Prostate gland (tissue), 2 donors: ENCODE measurements at regions of chr14 and their contacts with region 1.

Region 1: GRCh38 chr14:100108042-100108825 is 43.0 kb downstream of the EVL start:
- DNase-seq: peak; percentile 61
- H3K4me3 ChIP-seq: no peak overlapping the region
- H3K27ac ChIP-seq: no peak overlapping the region
- H3K4me1 ChIP-seq: peaks cover 8% of the 10 kb centered on the region
- H3K27me3 ChIP-seq: no peaks in the 10 kb centered on the region
- CTCF ChIP-seq: peak; percentile 66 to 87 (median 76)
- POLR2A ChIP-seq: no peak

Region 2: DNA sequence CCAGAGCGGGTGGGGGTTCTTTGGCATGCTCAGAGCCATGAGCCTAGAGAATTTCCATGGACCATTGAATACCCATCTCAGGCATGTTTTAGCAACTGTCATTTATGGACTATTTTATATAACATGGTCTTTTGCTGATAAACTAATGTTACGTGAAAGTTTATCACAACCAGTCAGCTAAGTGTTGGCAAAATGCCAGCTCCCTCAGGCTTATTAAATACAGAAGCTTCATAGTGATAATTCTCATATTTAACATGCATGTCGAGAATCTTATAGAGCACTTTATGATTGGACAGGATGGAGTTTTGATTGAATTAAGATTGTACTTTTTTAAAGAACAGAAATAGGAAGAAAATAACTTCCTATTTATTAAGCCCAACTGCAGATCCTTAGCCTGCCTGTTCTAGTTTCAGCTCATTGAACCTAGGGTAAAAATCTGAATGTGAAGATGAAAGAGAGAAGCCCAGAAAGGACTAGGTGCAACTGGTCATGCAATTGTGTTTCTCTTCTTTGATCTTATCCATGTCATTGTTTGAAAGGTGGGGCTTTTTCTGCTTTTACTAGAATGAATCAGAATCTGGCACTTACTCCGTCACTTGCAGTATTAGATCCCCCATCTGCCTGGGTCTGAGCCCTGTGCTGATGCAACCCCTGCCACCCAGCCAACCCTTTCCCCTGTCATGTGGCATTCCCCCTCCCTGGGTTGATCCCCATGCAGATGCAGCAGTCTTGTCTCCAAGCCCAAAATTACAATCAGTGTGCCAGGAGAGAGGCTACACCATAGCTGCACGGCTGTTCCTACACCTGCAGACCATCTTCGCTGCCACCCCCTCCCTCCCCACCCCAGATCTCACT is 177.6 kb before region 1 on chr14:
- intact Hi-C with region 1: no loop called
- DNase-seq: no peak
- H3K4me3 ChIP-seq: no peak overlapping the region
- H3K27ac ChIP-seq: no peak overlapping the region
- H3K4me1 ChIP-seq: no peaks in the 10 kb centered on the region
- H3K27me3 ChIP-seq: no peaks in the 10 kb centered on the region
- CTCF ChIP-seq: no peak
- POLR2A ChIP-seq: no peak

Region 3: DNA sequence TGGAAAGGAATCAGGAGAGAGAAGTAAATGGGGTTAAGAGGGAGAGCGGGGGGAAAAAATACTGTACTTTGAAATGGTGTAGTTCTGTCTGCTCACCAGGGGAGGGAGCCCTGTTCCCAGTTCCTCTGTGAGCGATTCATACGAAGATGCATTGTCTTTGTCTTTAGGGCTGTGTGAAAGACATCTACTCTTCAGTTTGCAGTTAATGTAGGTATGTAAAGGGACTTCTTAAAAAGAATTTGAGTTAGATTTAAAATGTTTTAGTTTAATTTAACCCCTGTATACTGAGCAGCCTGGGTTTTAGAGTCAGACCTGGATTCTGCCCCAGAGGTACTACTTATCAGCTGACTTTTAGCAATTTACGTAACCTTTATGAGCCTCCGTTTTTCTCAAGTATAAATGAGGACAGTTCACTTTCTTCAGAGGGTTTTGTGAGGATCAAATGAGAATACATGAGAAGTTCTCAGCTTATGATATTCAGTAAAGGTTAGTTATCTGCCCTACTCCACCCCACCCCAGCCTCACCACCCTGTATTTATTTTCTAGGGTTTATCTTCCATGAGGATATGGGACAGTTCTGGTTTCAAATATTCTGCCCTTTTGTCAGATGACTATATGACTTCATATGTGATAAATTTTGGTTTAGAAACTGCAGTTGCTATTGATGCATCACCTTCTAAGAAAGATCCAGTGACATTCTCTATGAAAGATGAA is 125.5 kb before region 1 on chr14:
- intact Hi-C with region 1: loop called (anchors 1 kb)
- DNase-seq: peak; percentile 51
- H3K4me3 ChIP-seq: no peak overlapping the region
- H3K27ac ChIP-seq: no peak overlapping the region
- H3K4me1 ChIP-seq: peaks cover 3% of the 10 kb centered on the region
- H3K27me3 ChIP-seq: no peaks in the 10 kb centered on the region
- CTCF ChIP-seq: peak; percentile 53 to 92 (median 82)
- POLR2A ChIP-seq: no peak

Region 4: GRCh38 chr14:100025111-100025510 is 83.1 kb before region 1 on chr14:
- intact Hi-C with region 1: loop called (anchors 10 kb)
- DNase-seq: peak; percentile 34
- H3K4me3 ChIP-seq: no peak overlapping the region
- H3K27ac ChIP-seq: no peak overlapping the region
- H3K4me1 ChIP-seq: no peaks in the 10 kb centered on the region
- H3K27me3 ChIP-seq: no peaks in the 10 kb centered on the region
- CTCF ChIP-seq: peak in 2 of 4 experiments; percentile 26 to 33
- POLR2A ChIP-seq: no peak

Region 5: DNA sequence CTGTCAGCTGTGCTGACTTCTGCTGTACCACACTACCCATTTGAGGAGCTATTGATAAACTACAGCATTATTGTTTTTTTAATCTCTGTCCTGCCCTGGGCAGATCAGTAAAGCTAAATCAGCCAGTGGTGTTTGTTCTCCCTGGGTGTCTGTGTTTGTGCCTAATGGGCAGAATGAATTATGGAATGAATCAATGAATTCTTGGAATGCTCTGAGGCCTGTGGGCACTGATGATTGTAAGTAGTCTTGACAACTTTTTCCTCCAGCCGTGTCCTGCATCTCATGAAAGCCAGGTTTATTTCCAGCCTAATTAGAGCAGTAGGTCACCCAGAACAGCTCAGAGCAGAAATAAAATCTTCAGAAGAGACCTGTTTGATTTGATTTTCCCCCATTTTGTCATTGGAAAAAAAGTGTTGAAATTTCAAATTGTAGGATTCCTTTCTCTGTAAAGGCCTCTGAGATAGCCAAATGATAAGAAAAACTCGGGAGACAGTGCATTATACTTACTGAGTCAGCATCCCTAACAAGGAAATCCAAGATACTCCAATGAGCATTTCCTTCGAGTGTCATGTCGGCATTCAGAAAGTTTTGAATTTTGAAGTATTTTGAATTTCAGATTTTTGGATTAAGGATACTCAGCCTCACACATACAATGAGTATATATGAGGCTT is 62.5 kb before region 1 on chr14:
- intact Hi-C with region 1: no loop called
- DNase-seq: no peak
- H3K4me3 ChIP-seq: no peak overlapping the region
- H3K27ac ChIP-seq: no peak overlapping the region
- H3K4me1 ChIP-seq: no peaks in the 10 kb centered on the region
- H3K27me3 ChIP-seq: no peaks in the 10 kb centered on the region
- CTCF ChIP-seq: no peak
- POLR2A ChIP-seq: no peak

Region 6: DNA sequence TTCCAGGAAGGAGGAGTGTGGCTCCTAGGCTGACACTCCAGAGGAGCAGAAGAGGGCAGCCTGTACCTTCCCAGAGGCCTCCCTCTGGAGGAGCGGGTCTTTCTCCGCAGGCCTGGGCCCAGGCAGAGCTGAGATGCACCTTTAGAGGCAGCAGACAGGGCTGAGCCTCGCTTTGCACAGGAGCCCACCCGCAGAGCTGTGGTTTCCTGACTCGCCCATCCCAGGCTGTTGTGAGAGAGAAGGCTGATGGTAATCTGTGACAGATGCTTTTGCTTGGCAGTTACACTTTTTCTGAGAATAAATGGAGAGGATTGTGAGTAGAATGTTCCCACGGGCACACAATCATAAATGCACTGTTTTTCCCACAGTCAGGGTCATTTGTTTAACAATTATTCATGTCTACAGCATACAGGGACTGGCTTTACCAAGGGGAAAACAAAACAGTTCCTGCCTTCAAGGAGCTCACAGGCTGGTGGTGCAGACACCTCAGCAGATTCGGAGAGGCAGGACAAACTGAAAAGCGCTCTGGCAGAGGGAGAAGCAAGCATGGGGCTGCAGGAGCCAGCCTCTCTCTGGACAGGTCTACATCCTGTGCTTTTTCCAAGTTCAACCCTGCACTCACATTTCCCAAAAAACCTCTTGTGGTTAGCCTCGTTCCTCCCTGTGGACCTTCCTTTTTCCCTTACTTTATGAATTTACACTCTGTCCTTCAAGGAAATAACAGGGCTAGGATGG is 29.1 kb before region 1 on chr14:
- intact Hi-C with region 1: loop called (anchors 1 kb)
- DNase-seq: no peak
- H3K4me3 ChIP-seq: no peak overlapping the region
- H3K27ac ChIP-seq: no peak overlapping the region
- H3K4me1 ChIP-seq: peaks cover 7% of the 10 kb centered on the region
- H3K27me3 ChIP-seq: no peaks in the 10 kb centered on the region
- CTCF ChIP-seq: no peak
- POLR2A ChIP-seq: no peak

Region 7: DNA sequence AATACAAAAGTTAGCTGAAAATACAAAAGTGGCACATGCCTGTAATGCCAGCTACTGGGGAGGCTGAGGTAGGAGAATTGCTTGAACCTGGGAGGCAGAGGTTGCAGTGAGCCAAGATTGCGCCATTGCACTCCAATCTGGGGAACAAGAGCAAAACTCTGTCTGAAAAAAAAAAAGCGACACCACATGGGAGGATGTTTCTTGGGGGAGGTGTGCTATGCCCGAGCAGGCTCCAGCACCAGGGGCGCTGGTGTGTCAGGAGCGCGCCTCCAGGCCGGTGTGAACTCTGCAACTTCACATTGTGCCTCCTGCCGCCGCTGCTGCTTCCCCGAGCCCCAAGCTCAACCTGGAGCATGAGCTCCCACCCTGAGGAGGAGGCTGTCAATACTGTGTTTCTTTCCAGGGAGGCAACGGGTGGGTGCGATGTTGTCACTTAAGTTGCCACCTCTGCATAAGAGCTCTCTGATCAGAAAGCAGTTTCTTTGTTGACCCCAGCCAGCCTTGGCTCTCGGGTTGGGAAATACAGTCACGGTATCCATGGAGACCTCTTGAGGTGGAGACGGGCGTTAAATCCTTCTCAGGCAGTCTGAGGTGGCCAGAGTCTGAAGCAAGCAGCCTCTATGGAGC is 32.3 kb after region 1 on chr14:
- intact Hi-C with region 1: no loop called
- DNase-seq: no peak
- H3K4me3 ChIP-seq: no peak overlapping the region
- H3K27ac ChIP-seq: no peak overlapping the region
- H3K4me1 ChIP-seq: no peaks in the 10 kb centered on the region
- H3K27me3 ChIP-seq: no peaks in the 10 kb centered on the region
- CTCF ChIP-seq: no peak
- POLR2A ChIP-seq: no peak

Region 8: DNA sequence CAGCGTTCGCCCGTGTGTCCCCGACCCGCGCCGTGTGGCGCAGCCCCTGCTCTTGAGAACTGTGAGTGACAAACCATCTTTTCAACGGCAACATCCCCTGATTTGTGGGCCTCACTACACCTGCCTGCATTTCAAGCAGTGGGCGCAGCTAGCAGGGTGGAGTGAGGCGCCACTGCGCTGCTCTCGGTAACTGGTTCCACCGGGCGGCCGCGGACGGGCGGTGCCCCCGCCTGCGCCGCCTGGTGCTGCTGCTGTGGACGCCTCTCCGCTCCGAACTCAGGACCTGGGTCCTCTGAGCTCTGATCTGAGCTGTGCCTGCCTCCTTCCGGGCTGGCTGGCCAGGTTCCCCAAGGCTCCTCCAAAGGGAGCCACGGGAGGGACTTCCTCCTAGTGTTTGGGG is 57.1 kb after region 1 on chr14:
- intact Hi-C with region 1: no loop called
- DNase-seq: peak; percentile 32
- H3K4me3 ChIP-seq: no peak overlapping the region
- H3K27ac ChIP-seq: no peak overlapping the region
- H3K4me1 ChIP-seq: no peaks in the 10 kb centered on the region
- H3K27me3 ChIP-seq: no peaks in the 10 kb centered on the region
- CTCF ChIP-seq: peak in 2 of 4 experiments; percentile 42 to 58
- POLR2A ChIP-seq: no peak

Region 9: GRCh38 chr14:100192672-100193416 is 84.6 kb after region 1 on chr14:
- intact Hi-C with region 1: loop called (anchors 2 kb)
- DNase-seq: peak; percentile 100
- H3K4me3 ChIP-seq: peak overlapping the region; percentile 26 to 27
- H3K27ac ChIP-seq: peak overlapping the region; percentile 87 to 88
- H3K4me1 ChIP-seq: peaks cover 6% of the 10 kb centered on the region
- H3K27me3 ChIP-seq: no peaks in the 10 kb centered on the region
- CTCF ChIP-seq: peak; percentile 93 to 98 (median 98)
- POLR2A ChIP-seq: peak; percentile 64